Natural killer cell (primary cell): ENCODE measurements at regions of chr11 and their contacts with region 1.

Region 1: DNA sequence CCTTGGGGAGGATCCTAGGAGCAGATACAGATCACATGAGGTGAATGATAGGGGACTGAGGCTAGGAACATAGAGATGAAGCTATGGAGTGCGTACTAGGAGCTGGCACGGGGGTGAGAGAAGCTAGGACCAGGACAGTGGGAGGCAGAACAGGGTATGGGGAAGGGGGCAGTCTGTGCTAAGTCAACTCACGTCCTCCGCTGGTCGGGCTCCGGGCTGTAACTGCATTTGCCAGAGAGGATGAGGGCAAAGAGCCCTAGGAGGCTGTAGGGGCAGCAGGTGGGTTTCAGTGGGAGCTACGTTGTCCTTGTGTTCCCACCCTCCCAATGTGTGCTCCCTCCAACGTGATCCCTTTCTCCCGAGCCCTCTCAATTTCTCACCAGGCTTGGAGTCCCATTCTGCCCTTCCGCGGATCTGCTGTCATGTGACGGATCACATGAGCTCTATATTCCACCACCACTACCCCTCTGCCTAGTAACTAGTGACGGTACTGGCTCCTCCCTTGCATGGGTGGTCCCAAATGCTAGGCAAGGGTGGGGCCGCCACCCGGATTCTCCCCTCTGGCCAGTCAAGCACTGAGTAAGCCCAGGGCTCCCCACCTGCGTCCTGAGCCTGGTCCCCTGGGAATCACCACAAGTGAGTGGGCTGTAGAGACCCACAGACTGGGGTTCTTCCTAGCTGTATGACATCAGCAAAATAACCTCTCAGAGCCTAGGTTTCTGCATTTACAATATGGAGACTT is at the start of gene TPP1:
- DNase-seq: peak; percentile 89 to 95
- ATAC-seq: peak; percentile 89 to 97 (median 96)
- H3K4me3 ChIP-seq: peak within 1 kb of the TSS; percentile 72
- H3K4me3 Mint-ChIP-seq: no peak within 1 kb of the TSS
- H3K27ac ChIP-seq: peak within 1 kb of the TSS; percentile 89
- H3K27ac Mint-ChIP-seq: no peak within 1 kb of the TSS
- H3K4me1 ChIP-seq: peaks cover 26% of the 10 kb centered on the region
- H3K4me1 Mint-ChIP-seq: peaks cover 0 to 8% of the 10 kb centered on the region in 2 donors
- H3K27me3 ChIP-seq: no peaks in the 10 kb centered on the region
- H3K27me3 Mint-ChIP-seq: no peaks in the 10 kb centered on the region
- CTCF ChIP-seq: no peak
- total RNA-seq, gene TPP1: 123 to 135 (median 131) TPM

Region 2: DNA sequence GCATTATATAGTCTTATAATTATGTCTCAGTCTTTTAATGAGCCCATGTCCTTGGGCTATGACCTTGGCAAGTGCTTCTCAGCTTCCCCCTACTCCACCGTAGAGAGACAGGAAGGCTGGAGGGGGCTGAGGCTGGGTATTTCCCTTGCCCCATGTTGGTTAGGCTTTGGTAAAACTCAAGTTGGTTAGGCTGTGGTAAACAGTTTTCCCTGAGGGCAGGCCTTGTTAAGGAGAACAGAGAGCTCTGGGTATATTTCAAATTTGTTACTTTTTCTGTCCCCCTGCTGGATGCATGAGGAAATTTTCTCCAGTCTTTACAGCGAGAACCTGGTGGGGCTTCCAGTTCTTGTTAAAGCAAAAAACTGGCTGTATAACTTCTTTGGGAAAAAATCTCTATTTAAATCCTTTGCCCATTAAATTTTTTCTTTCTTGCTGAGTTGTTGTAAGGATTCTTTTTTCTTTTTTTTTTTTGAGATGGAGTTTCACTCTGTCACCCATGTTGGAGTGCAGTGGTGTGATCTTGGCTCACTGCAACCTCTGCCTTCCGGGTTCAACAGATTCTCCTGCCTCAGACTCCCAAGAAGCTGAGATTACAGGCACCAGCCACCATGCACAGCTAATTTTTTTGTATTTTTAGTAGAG is 48.7 kb after region 1 on chr11:
- intact Hi-C with region 1: loop called (anchors 5 kb)
- DNase-seq: peak in 1 of 2 donors; percentile 78
- ATAC-seq: peak; percentile 66 to 94 (median 86)
- H3K4me3 ChIP-seq: no peak overlapping the region
- H3K4me3 Mint-ChIP-seq: no peak overlapping the region
- H3K27ac ChIP-seq: peak overlapping the region; percentile 35
- H3K27ac Mint-ChIP-seq: peak overlapping the region; percentile 65 to 78
- H3K4me1 ChIP-seq: peaks cover 10% of the 10 kb centered on the region
- H3K4me1 Mint-ChIP-seq: peaks cover 10 to 14% of the 10 kb centered on the region in 2 donors
- H3K27me3 ChIP-seq: no peaks in the 10 kb centered on the region
- H3K27me3 Mint-ChIP-seq: peaks cover 0 to 3% of the 10 kb centered on the region in 2 donors
- CTCF ChIP-seq: peak; percentile 66